Heart left ventricle (tissue), 16 donors: ENCODE measurements at regions of chr2 and their contacts with region 1.

Region 1: GRCh38 chr2:24084386-24085361 is at the start of gene TP53I3:
- DNase-seq: peak; percentile 88 to 95 (median 91)
- ATAC-seq: peak; percentile 94 to 97 (median 96)
- H3K4me3 ChIP-seq: peak within 1 kb of the TSS; percentile 34 to 81 (median 69)
- H3K27ac ChIP-seq: peak within 1 kb of the TSS; percentile 85 to 98 (median 92)
- H3K4me1 ChIP-seq: peaks cover 0 to 27% (median 13%) of the 10 kb centered on the region in 12 donors
- H3K27me3 ChIP-seq: no peaks in the 10 kb centered on the region
- CTCF ChIP-seq: peak; percentile 93 to 99 (median 96)
- POLR2A ChIP-seq: peak in 1 of 2 donors; percentile 49
- total RNA-seq, gene TP53I3: 4.7 to 21.8 (median 9.6) TPM

Region 2: DNA sequence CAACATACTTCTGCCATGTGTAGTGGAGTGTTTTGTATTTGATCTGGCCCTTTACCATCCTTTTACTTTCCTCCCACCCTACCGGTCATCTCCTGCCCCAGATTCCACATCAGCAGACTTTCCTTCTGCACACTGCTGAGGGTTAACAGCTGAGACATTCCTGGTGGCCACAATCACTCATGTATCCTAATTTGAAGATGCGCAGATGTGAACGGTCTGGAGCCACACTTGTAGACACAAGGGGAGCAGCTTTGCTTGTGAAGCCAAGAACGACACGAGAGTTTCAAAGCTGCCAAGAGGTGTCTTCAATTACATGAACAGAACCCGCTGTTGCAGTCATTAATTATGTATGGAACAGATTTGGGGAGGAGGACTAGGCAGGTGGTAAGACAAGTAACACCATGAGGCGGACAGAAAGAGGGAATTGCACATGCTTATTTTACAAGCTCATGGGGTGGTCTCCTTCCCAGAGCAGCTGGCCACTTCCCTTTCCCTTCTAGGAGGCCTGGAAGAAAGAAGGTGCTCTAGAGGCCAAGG is 960.4 kb before region 1 on chr2:
- intact Hi-C with region 1: no loop called
- DNase-seq: no peak
- ATAC-seq: no peak
- H3K4me3 ChIP-seq: no peak overlapping the region
- H3K27ac ChIP-seq: no peak overlapping the region
- H3K4me1 ChIP-seq: no peaks in the 10 kb centered on the region
- H3K27me3 ChIP-seq: no peaks in the 10 kb centered on the region
- CTCF ChIP-seq: no peak
- POLR2A ChIP-seq: no peak

Region 3: GRCh38 chr2:23824777-23825212 is 259.9 kb before region 1 on chr2:
- intact Hi-C with region 1: loop called in 6 of 10 experiments (anchors 2 to 10 kb)
- DNase-seq: no peak
- ATAC-seq: peak in 2 of 4 donors; percentile 24 to 46
- H3K4me3 ChIP-seq: no peak overlapping the region
- H3K27ac ChIP-seq: no peak overlapping the region
- H3K4me1 ChIP-seq: peaks cover 0 to 12% (median 0%) of the 10 kb centered on the region in 12 donors
- H3K27me3 ChIP-seq: no peaks in the 10 kb centered on the region
- CTCF ChIP-seq: peak; percentile 53 to 76 (median 67)
- POLR2A ChIP-seq: no peak

Region 4: GRCh38 chr2:23926750-23927571 is 157.7 kb before region 1 on chr2 and contains the start of gene ATAD2B:
- intact Hi-C with region 1: loop called in 9 of 10 experiments (anchors 1 to 10 kb)
- DNase-seq: peak; percentile 89 to 96 (median 93)
- ATAC-seq: peak; percentile 85 to 96 (median 94)
- H3K4me3 ChIP-seq: peak within 1 kb of the TSS; percentile 64 to 96 (median 84)
- H3K27ac ChIP-seq: peak within 1 kb of the TSS; percentile 86 to 99 (median 97)
- H3K4me1 ChIP-seq: peaks cover 2 to 47% (median 32%) of the 10 kb centered on the region in 12 donors
- H3K27me3 ChIP-seq: no peaks in the 10 kb centered on the region
- CTCF ChIP-seq: peak; percentile 72 to 98 (median 90)
- POLR2A ChIP-seq: peak in 1 of 2 donors; percentile 76
- total RNA-seq, gene ATAD2B: 5.0 to 13.3 (median 8.3) TPM

Region 5: DNA sequence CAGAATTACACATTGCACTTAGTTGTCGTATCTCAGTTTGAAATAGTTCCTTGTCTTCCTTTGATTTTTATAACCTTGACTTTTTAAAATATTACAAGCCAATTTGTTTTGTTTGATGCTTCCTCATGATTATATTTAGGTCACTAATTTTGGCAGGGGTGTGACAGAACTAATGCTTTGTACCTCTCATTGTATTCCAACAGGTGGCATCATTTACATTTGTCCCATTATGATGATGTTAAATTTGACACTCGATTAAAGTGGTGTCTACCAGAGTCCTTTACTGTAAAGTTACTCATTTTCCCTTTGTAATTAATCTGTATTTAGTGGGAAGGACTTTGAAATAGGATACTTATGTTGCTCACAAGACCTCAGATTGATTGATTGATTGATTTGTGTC is 96.3 kb before region 1 on chr2:
- intact Hi-C with region 1: loop called in 2 of 10 experiments (anchors 5 kb)
- DNase-seq: no peak
- ATAC-seq: no peak
- H3K4me3 ChIP-seq: no peak overlapping the region
- H3K27ac ChIP-seq: no peak overlapping the region
- H3K4me1 ChIP-seq: no peaks in the 10 kb centered on the region
- H3K27me3 ChIP-seq: no peaks in the 10 kb centered on the region
- CTCF ChIP-seq: peak in 8 of 12 donors; percentile 10 to 43 (median 22)
- POLR2A ChIP-seq: no peak

Region 6: GRCh38 chr2:24123195-24123921 is 38.7 kb after region 1 on chr2 and contains the starts of genes FAM228B and PFN4:
- intact Hi-C with region 1: loop called in 5 of 10 experiments (anchors 2 to 5 kb)
- DNase-seq: peak; percentile 92 to 94 (median 94)
- ATAC-seq: peak; percentile 96 to 99 (median 98)
- H3K4me3 ChIP-seq: peak within 1 kb of the TSS; percentile 39 to 95 (median 83)
- H3K27ac ChIP-seq: peak within 1 kb of the TSS; percentile 83 to 97 (median 95)
- H3K4me1 ChIP-seq: peaks cover 0 to 30% (median 16%) of the 10 kb centered on the region in 12 donors
- H3K27me3 ChIP-seq: no peaks in the 10 kb centered on the region
- CTCF ChIP-seq: peak in 1 of 12 donors; percentile 7
- POLR2A ChIP-seq: peak in 1 of 2 donors; percentile 89
- total RNA-seq, gene FAM228B: 11.1 to 36.9 (median 21.2) TPM
- total RNA-seq, gene PFN4: 0.50 to 0.76 (median 0.59) TPM in 5 of 9 donors, not detected in the others